ENCODE measurements at regions of chr3 and their contacts with region 1.

Region 1: GRCh38 chr3:72818092-72818773 is 30.0 kb downstream of the SHQ1 start:
- DNase-seq: no peak
- ATAC-seq: no peak
- H3K4me3 Mint-ChIP-seq: no peak overlapping the region
- H3K27ac Mint-ChIP-seq: peak overlapping the region; percentile 38
- H3K4me1 Mint-ChIP-seq: peaks cover 25% of the 10 kb centered on the region
- H3K27me3 Mint-ChIP-seq: no peaks in the 10 kb centered on the region

Region 2: GRCh38 chr3:71710906-71711494 is 1107.2 kb before region 1 on chr3:
- CTCF ChIA-PET with region 1: interaction called, 3 read pairs
- POLR2A ChIA-PET with region 1: no interaction called
- intact Hi-C with region 1: loop called (anchors 5 kb)
- DNase-seq: no peak
- ATAC-seq: peak; percentile 81
- H3K4me3 Mint-ChIP-seq: no peak overlapping the region
- H3K27ac Mint-ChIP-seq: peak overlapping the region; percentile 51
- H3K4me1 Mint-ChIP-seq: peaks cover 74% of the 10 kb centered on the region
- H3K27me3 Mint-ChIP-seq: no peaks in the 10 kb centered on the region

Region 3: GRCh38 chr3:71955240-71956068 is 862.8 kb before region 1 on chr3:
- CTCF ChIA-PET with region 1: interaction called, 3 read pairs
- POLR2A ChIA-PET with region 1: no interaction called
- intact Hi-C with region 1: loop called in 1 of 2 experiments (anchors 5 kb)
- DNase-seq: peak; percentile 72
- ATAC-seq: peak; percentile 80
- H3K4me3 Mint-ChIP-seq: no peak overlapping the region
- H3K27ac Mint-ChIP-seq: peak overlapping the region; percentile 55
- H3K4me1 Mint-ChIP-seq: peaks cover 35% of the 10 kb centered on the region
- H3K27me3 Mint-ChIP-seq: peaks cover 2% of the 10 kb centered on the region

Region 4: DNA sequence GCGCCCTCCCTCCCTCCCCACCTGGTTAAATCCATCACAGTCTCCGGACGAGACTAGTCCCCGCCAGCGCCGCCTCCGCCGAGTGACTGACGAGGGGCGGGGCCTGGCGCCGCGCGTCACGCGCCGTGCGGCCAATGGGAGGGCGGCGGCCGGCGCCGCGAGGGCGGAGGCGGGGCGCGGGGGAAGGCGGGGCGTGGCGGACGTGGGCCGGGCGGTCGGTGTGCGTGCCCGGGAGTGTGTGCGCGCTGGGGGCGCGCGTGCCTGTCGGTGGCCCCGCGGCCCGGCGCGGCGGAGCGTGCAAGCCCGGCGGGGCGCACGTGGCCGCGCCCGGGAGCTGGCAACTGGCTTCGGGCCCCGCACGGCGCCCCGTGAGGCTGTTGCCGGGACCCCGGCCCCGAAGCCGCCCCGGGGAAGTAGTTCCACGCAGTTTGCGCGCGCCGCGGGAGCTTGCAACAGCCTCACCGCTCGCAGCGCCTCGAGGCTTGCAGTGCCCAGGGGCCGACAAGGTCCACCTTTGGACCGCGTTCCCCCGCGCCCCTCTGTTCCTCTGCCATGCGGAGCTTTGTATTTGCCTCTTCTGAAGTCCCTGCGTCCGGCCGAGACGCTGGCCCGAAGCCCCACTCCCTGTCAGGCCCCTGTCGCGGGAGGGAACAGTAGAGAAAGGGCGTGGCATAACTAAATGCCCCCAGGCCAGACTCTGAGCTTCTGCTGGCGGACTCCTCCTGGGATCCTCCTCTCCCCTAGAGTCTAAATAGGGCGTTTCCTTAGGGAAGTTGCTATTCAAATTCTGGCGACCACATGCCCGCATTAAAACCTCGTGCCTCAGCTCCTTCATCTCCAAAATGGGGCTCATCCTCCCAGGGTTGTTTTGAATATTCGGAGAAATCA is 370.9 kb before region 1 on chr3:
- CTCF ChIA-PET with region 1: interaction called, 3 read pairs
- POLR2A ChIA-PET with region 1: no interaction called
- intact Hi-C with region 1: loop called (anchors 5 kb)
- DNase-seq: peak; percentile 96
- ATAC-seq: peak; percentile 87
- H3K4me3 Mint-ChIP-seq: peak overlapping the region; percentile 43
- H3K27ac Mint-ChIP-seq: peak overlapping the region; percentile 63
- H3K4me1 Mint-ChIP-seq: peaks cover 38% of the 10 kb centered on the region
- H3K27me3 Mint-ChIP-seq: peaks cover 13% of the 10 kb centered on the region

Region 5: GRCh38 chr3:72665701-72666443 is 152.4 kb before region 1 on chr3:
- CTCF ChIA-PET with region 1: interaction called, 59 read pairs
- POLR2A ChIA-PET with region 1: no interaction called
- intact Hi-C with region 1: loop called (anchors 1 to 2 kb)
- DNase-seq: peak; percentile 76
- ATAC-seq: peak; percentile 81
- H3K4me3 Mint-ChIP-seq: no peak overlapping the region
- H3K27ac Mint-ChIP-seq: no peak overlapping the region
- H3K4me1 Mint-ChIP-seq: peaks cover 3% of the 10 kb centered on the region
- H3K27me3 Mint-ChIP-seq: no peaks in the 10 kb centered on the region

Region 6: DNA sequence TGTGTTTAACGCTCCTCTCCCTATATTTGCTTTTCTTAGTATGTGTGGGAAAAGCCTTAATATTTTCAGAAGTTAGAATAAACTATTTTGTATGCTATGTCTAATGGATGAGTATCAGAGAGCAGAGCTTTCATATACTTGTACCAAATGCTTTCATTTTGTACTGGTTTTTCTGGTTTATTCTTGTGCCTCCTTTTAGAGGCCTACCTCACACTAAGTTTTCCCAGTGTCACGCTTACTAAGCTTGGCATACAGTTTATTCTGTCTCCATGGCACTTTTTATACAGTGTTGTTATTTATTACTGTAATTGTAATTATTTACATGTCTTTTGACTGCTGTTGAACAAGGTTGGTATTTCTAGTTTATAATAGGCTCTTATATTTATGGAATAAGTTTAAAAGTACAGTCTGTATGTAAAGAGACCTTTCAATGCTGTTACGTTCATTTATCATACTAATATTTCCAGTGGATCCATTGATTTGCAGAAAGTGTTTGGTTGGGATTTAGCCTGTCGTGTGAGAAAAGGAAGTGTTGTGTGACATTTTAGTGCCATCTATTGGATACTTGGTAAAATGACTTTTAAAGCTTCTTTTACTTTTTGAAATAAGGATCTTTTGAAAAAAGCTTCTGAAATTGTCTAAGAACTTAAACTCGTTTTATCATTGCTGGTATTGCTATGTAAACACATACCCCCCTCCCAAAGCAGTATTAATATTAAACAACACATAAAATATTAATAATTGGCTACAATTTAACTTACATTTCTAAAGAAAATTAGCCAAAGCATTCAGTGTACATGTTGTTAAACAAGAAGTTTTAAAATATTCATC is 238.0 kb after region 1 on chr3:
- CTCF ChIA-PET with region 1: interaction called, 11 read pairs
- POLR2A ChIA-PET with region 1: no interaction called
- intact Hi-C with region 1: no loop called
- DNase-seq: no peak
- ATAC-seq: no peak
- H3K4me3 Mint-ChIP-seq: no peak overlapping the region
- H3K27ac Mint-ChIP-seq: peak overlapping the region; percentile 19
- H3K4me1 Mint-ChIP-seq: peaks cover 28% of the 10 kb centered on the region
- H3K27me3 Mint-ChIP-seq: no peaks in the 10 kb centered on the region